PC-9 (cell line): ENCODE measurements at regions of chr1 and their contacts with region 1.

Region 1: DNA sequence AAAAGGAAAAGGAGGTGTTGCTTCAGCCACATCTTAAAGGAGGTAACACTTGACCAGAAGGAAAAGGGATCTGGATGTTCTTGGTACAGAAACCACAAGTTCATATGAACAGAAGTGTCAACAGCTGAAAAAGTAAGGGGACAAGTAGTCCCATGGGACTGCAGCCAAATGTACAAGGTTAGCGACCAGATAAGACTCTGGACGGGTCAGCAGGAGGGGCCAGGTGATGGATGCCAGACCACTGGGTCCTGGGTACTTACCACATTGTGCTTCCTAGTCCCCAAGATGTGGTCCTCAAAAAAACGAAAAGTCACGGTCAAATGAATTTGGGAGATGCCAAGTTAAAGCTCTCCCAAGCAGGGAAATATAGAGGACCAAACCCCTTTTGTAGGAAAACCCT is 16.6 kb upstream of the BMP8A start:
- DNase-seq: no peak
- H3K4me3 ChIP-seq: no peak overlapping the region
- H3K27ac ChIP-seq: no peak overlapping the region
- H3K4me1 ChIP-seq: no peaks in the 10 kb centered on the region
- H3K27me3 ChIP-seq: no peaks in the 10 kb centered on the region
- CTCF ChIP-seq: no peak

Region 2: DNA sequence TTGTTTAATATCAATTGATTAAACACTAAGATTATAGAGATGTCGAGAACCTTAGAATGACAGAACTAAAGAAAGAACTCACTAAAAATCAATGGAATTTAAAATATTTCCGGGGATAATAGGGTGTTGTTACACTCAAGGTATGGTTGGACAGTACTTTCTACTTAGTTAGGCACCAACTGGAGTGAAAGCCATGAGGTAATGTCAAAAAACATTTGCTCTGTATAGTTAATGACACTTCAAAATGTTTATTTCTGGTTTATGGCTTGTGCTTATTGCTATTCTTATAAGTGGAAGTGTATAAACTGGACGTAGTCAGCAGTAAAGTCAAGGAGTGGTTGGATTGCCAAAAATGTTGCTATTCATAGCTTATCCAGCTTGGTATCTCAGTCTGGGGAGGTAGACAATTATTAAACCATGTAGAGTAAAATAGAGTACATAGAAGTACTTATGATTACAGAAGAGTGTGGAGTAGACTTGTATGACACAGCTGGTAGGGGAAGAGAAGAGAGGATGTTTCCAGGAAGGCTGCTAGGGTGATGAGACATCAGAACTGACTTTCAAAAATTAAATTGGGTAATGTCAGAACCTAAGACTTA is 39.9 kb before region 1 on chr1:
- CTCF ChIA-PET with region 1: no interaction called
- POLR2A ChIA-PET with region 1: no interaction called
- intact Hi-C with region 1: loop called (anchors 5 kb)
- DNase-seq: no peak
- H3K4me3 ChIP-seq: no peak overlapping the region
- H3K27ac ChIP-seq: no peak overlapping the region
- H3K4me1 ChIP-seq: no peaks in the 10 kb centered on the region
- H3K27me3 ChIP-seq: no peaks in the 10 kb centered on the region
- CTCF ChIP-seq: no peak